ENCODE measurements at regions of chr4 and their contacts with region 1.

Region 1: GRCh38 chr4:141133146-141133998 is at the start of gene RNF150:
- DNase-seq: peak; percentile 79 to 84 (median 83)
- ATAC-seq: peak; percentile 76 to 88 (median 86)
- H3K4me3 ChIP-seq: peak within 1 kb of the TSS; percentile 59 to 96 (median 83)
- H3K27ac ChIP-seq: peak within 1 kb of the TSS; percentile 82 to 96 (median 91)
- H3K4me1 ChIP-seq: peaks cover 0 to 37% (median 4%) of the 10 kb centered on the region in 12 donors
- H3K27me3 ChIP-seq: peaks cover 0 to 43% (median 0%) of the 10 kb centered on the region in 9 donors
- CTCF ChIP-seq: peak; percentile 34 to 73 (median 68)
- POLR2A ChIP-seq: peak in 1 of 2 donors; percentile 25
- total RNA-seq, gene RNF150: 52.0 to 146 (median 73.3) TPM

Region 2: GRCh38 chr4:140861359-140862176 is 271.8 kb before region 1 on chr4:
- intact Hi-C with region 1: loop called (anchors 1 to 2 kb)
- DNase-seq: peak in 4 of 5 donors; percentile 52 to 69 (median 60)
- ATAC-seq: peak; percentile 53 to 68 (median 62)
- H3K4me3 ChIP-seq: no peak overlapping the region
- H3K27ac ChIP-seq: peak overlapping the region in 5 of 12 donors; percentile 20 to 59 (median 40)
- H3K4me1 ChIP-seq: peaks cover 0 to 22% (median 10%) of the 10 kb centered on the region in 12 donors
- H3K27me3 ChIP-seq: no peaks in the 10 kb centered on the region
- CTCF ChIP-seq: peak; percentile 64 to 86 (median 78)
- POLR2A ChIP-seq: no peak

Region 3: GRCh38 chr4:140876615-140877364 is 256.6 kb before region 1 on chr4:
- intact Hi-C with region 1: loop called in 1 of 10 experiments (anchors 5 kb)
- DNase-seq: no peak
- ATAC-seq: no peak
- H3K4me3 ChIP-seq: no peak overlapping the region
- H3K27ac ChIP-seq: peak overlapping the region in 1 of 12 donors; percentile 8
- H3K4me1 ChIP-seq: peaks cover 0 to 16% (median 2%) of the 10 kb centered on the region in 12 donors
- H3K27me3 ChIP-seq: no peaks in the 10 kb centered on the region
- CTCF ChIP-seq: no peak
- POLR2A ChIP-seq: no peak

Region 4: DNA sequence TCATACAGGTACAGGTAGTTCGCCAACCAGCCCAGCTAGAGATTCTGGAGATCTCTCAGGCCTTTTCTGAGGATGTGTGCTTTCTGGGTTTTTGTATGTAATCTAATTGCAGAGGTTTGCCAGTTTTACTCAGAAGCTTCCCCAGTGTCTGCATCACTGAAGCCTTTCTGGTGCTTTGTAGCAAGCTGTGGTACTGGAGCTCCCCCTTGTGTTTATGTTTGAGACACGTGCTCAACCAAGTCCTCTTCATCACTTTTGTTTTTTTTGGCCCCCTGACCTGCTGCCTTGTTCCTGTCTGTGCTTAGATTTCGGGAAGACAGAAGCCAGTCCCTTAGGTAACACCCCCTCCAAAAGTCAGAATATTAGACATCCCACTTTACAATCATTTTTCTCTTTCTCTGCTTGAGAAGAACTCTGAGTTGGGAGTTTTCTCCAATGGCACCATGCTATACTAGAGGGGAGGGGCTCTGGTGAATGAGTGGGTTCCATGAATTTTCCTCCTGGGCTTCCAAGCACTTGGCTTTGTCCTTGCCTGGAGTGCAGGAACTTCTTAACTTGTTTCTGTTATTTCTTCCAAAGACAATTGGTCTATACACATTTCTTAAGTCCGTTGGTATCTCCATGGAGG is 248.8 kb before region 1 on chr4:
- intact Hi-C with region 1: loop called in 5 of 10 experiments (anchors 1 to 5 kb)
- DNase-seq: peak in 4 of 5 donors; percentile 39 to 60 (median 44)
- ATAC-seq: peak; percentile 47 to 72 (median 70)
- H3K4me3 ChIP-seq: no peak overlapping the region
- H3K27ac ChIP-seq: peak overlapping the region in 1 of 12 donors; percentile 30
- H3K4me1 ChIP-seq: peaks cover 0 to 16% (median 3%) of the 10 kb centered on the region in 12 donors
- H3K27me3 ChIP-seq: no peaks in the 10 kb centered on the region
- CTCF ChIP-seq: peak; percentile 50 to 71 (median 61)
- POLR2A ChIP-seq: no peak

Region 5: GRCh38 chr4:140930557-140930956 is 202.8 kb before region 1 on chr4:
- intact Hi-C with region 1: loop called in 2 of 10 experiments (anchors 5 kb)
- DNase-seq: peak in 1 of 5 donors; percentile 63
- ATAC-seq: peak; percentile 82 to 91 (median 87)
- H3K4me3 ChIP-seq: no peak overlapping the region
- H3K27ac ChIP-seq: peak overlapping the region in 6 of 12 donors; percentile 6 to 60 (median 47)
- H3K4me1 ChIP-seq: peaks cover 0 to 58% (median 14%) of the 10 kb centered on the region in 12 donors
- H3K27me3 ChIP-seq: no peaks in the 10 kb centered on the region
- CTCF ChIP-seq: no peak
- POLR2A ChIP-seq: no peak

Region 6: DNA sequence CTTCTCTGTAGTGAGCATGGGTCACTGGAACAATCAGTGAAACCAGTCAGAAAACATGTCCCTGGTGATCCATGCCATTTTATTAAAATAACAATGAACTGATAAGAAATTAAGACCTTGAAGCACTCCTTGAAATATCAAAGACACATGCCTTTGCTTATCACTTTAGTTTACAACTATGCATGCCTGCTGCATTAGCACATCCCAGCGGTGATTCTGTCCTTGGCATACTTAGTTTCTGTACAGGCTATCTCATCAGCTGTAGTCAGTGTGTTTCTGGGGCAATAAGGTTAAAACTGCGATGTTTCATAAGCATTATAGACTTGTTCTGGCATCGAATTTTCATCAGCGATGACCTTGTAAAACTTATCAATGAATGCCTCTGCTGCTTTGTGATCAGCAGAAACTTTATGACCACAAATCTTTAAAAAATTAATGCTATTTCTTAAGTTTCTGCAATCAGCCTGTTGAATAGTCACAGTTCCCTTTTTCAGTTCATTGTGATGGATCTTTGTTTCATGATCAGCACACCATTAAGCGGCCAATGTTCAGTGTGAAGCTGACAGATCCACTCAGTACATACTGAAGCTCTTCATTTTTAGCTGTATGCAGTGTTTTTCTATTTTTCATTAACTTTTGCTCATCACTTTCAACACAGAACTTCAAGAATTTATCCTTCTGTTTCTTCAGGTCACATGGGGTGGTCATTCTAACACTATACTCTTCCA is 150.6 kb before region 1 on chr4:
- intact Hi-C with region 1: loop called in 1 of 10 experiments (anchors 5 kb)
- DNase-seq: no peak
- ATAC-seq: peak; percentile 76 to 87 (median 83)
- H3K4me3 ChIP-seq: no peak overlapping the region
- H3K27ac ChIP-seq: peak overlapping the region in 9 of 12 donors; percentile 29 to 77 (median 46)
- H3K4me1 ChIP-seq: peaks cover 0 to 45% (median 15%) of the 10 kb centered on the region in 12 donors
- H3K27me3 ChIP-seq: no peaks in the 10 kb centered on the region
- CTCF ChIP-seq: no peak
- POLR2A ChIP-seq: no peak

Region 7: GRCh38 chr4:140996766-140997165 is 136.6 kb before region 1 on chr4:
- intact Hi-C with region 1: loop called in 6 of 10 experiments (anchors 2 to 5 kb)
- DNase-seq: no peak
- ATAC-seq: no peak
- H3K4me3 ChIP-seq: no peak overlapping the region
- H3K27ac ChIP-seq: peak overlapping the region in 6 of 12 donors; percentile 1 to 75 (median 38)
- H3K4me1 ChIP-seq: peaks cover 0 to 57% (median 22%) of the 10 kb centered on the region in 12 donors
- H3K27me3 ChIP-seq: no peaks in the 10 kb centered on the region
- CTCF ChIP-seq: peak in 1 of 12 donors; percentile 41
- POLR2A ChIP-seq: no peak

Region 8: GRCh38 chr4:141158219-141158618 is 24.8 kb after region 1 on chr4:
- intact Hi-C with region 1: no loop called
- DNase-seq: no peak
- ATAC-seq: no peak
- H3K4me3 ChIP-seq: no peak overlapping the region
- H3K27ac ChIP-seq: no peak overlapping the region
- H3K4me1 ChIP-seq: peaks cover 0 to 17% (median 2%) of the 10 kb centered on the region in 12 donors
- H3K27me3 ChIP-seq: no peaks in the 10 kb centered on the region
- CTCF ChIP-seq: peak; percentile 36 to 66 (median 56)
- POLR2A ChIP-seq: no peak

Measured in heart left ventricle (tissue), 16 donors.